AG04449 (cell line): ENCODE measurements at regions of chr15 and their contacts with region 1.

Region 1: DNA sequence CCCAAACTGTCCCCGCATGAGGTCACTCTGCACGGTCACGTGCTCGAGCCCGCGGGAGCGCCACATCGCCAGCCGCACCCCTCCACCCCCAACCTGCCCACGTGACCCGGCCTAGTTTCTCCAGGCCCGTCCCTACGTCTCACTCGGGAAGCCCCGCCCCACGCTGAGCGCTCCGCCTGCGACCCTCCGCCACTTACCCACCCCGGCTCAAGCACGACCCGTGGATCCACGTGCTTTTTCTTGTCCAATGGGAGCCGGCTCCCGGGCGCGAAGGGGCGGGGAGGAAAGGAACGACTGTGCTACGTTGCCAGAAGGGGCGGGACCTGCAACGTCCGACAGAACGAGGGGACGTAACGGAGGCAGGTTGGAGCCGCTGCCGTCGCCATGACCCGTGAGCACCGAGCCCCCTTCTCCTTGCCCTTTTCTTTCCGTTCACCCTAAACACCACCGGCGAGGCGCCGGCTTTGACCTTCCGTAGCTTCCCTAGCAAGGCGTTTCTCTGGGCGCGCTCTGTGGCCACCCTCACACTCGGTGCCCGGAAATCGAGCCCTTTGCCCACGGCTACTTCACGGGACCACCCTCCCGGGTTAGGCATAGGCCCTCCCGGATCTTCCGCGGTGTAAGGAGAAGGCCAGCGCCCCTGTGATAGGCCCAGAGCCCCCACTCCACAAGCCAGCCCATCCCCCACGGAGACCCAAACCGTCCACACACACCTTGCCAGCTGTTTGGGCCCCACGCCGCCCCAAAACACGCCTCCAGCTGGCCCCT is at the start of gene SERF2:
- DNase-seq: peak; percentile 96
- H3K4me3 ChIP-seq: peak within 1 kb of the TSS; percentile 100
- CTCF ChIP-seq: no peak

Region 2: GRCh38 chr15:43776718-43777583 is 15.2 kb before region 1 on chr15 and contains the start of gene ELL3:
- CTCF ChIA-PET with region 1: interaction called, 34 read pairs
- POLR2A ChIA-PET with region 1: interaction called, 8 read pairs
- DNase-seq: no peak
- H3K4me3 ChIP-seq: peak within 1 kb of the TSS; percentile 73
- CTCF ChIP-seq: peak; percentile 83

Region 3: DNA sequence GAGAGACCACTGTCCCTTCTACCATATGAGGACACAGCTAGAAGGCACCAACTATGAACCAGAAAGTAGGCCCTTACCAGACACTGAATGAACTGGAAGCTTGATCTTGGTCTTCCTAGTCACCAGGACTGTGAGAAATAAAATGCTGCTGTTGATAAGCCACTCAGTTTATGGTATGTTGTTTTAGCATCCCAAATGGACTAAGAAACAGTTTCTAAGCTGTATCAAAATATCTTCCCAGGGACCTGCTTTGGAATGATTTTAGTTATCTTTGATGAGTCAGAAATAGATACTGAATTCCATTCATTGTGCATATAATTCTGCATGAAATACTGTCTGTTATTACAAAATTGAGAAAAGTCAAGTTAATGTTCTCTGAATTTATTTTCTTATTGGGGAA is 53.2 kb after region 1 on chr15:
- CTCF ChIA-PET with region 1: no interaction called
- POLR2A ChIA-PET with region 1: no interaction called
- DNase-seq: no peak
- H3K4me3 ChIP-seq: no peak overlapping the region
- CTCF ChIP-seq: no peak

Region 4: GRCh38 chr15:43881944-43882343 is 89.8 kb after region 1 on chr15:
- CTCF ChIA-PET with region 1: no interaction called
- POLR2A ChIA-PET with region 1: no interaction called
- DNase-seq: no peak
- H3K4me3 ChIP-seq: no peak overlapping the region
- CTCF ChIP-seq: peak; percentile 24